ENCODE measurements at regions of chr12 and their contacts with region 1.

Region 1: GRCh38 chr12:108833355-108833733 is 24.0 kb downstream of the SSH1 start:
- DNase-seq: peak; percentile 75
- H3K4me3 Mint-ChIP-seq: peak overlapping the region; percentile 54
- H3K27ac Mint-ChIP-seq: peak overlapping the region; percentile 83
- H3K4me1 Mint-ChIP-seq: peaks cover 53% of the 10 kb centered on the region
- H3K27me3 Mint-ChIP-seq: no peaks in the 10 kb centered on the region
- CTCF ChIP-seq: no peak

Region 2: GRCh38 chr12:108816652-108817335 is 16.6 kb before region 1 on chr12:
- CTCF ChIA-PET with region 1: interaction called, 8 read pairs
- POLR2A ChIA-PET with region 1: interaction called, 28 read pairs
- intact Hi-C with region 1: no loop called
- DNase-seq: peak; percentile 33
- H3K4me3 Mint-ChIP-seq: no peak overlapping the region
- H3K27ac Mint-ChIP-seq: peak overlapping the region; percentile 12
- H3K4me1 Mint-ChIP-seq: peaks cover 31% of the 10 kb centered on the region
- H3K27me3 Mint-ChIP-seq: no peaks in the 10 kb centered on the region
- CTCF ChIP-seq: no peak

Measured in MCF 10A (cell line).